ENCODE measurements at regions of chr6 and their contacts with region 1.

Region 1: DNA sequence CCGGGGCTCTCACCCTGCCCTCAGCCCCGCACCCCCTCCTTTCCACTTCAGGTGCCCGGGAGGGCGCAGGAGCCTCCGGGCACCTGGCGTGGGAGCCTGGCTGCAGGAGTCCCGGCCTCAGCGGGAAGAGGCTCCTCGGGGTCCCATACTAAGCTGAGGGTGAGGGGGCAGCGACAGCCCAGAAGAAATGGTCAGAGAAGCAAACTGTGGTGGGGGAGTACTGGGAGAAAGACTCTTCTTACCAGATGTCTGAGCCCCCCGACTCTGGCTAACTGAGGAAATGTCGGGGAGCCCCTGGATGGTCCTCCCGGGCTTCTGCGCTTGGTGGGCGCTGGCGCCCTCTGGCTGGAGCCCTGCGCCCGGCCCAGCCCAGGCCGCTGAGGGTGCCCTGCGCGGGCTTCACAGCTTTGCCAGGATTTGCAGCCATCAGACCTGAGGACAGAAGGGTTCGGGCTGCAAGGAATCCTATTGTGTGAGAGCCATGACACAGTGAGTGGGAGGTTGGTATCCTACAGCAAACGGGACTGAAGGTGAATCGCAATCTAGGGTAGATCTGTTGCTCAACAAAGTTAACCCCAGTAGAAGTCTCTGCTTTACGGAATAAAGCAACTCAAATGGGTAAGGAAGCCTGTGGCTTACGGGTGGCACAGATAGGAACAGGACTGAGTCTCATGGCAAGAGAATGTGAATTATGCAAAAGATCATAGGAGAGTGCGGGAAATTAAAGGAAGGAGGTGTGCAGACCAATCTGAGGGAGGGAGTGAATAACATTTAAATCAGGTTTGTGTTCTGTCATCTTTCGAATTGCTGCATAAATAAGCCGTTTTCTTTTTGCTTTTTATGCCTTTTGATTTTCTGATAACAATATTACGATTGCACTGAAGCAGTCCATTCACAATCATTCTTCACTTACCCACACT is 639 bp upstream of the RCAN2 start:
- DNase-seq: peak in 1 of 2 donors; percentile 83
- H3K4me3 ChIP-seq: peak overlapping the region; percentile 64 to 89
- H3K27ac ChIP-seq: peak overlapping the region; percentile 94 to 97
- H3K4me1 ChIP-seq: no peaks in the 10 kb centered on the region
- H3K27me3 ChIP-seq: no peaks in the 10 kb centered on the region
- CTCF ChIP-seq: peak; percentile 81 to 95 (median 83)

Region 2: DNA sequence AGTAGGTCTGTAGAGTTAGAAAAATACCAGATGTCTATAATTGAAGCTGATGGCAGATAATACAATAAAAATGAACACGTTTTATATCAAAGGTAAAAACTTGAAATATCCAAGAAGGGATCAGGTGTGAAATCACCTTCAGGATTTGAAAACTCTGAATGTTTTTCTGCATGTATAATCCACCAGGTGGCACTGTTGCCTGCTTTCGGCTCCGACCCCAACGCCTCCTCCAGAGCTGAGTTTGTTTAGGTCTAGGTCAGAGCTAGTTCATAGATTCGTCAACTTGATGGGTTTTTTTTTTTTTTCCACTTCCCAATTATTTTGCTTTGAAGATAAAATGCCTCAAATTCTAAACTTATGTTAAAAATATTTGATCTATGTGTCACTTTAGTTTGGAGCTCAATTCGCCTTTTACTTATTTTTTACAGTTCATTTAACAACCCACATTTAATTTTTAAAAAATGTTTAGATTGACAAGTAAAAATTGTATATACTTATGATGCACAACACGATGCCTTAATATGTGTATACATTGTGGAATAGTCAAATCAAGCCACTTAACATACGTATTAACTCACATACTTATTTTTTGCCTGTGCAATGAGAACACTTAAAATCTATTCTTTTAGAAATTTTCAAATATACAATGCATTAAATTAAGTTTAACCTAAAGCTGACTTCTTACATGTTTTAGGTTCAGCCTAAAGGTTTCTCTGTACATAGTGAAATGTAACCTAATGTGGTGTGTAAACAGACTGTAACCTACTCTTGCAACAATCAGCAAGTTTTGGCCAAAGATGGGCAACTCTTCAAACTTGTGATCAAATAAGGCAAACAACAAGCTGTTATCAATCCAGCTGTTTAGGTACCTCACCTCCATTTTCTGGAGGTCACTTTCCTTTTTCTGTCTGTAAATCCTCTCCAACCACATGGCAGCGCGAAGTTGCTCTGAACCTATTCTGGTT is 401.5 kb before region 1 on chr6:
- intact Hi-C with region 1: loop called (anchors 5 kb)
- DNase-seq: peak in 1 of 2 donors; percentile 73
- H3K4me3 ChIP-seq: no peak overlapping the region
- H3K27ac ChIP-seq: no peak overlapping the region
- H3K4me1 ChIP-seq: no peaks in the 10 kb centered on the region
- H3K27me3 ChIP-seq: no peaks in the 10 kb centered on the region
- CTCF ChIP-seq: peak; percentile 58 to 80 (median 67)

Region 3: DNA sequence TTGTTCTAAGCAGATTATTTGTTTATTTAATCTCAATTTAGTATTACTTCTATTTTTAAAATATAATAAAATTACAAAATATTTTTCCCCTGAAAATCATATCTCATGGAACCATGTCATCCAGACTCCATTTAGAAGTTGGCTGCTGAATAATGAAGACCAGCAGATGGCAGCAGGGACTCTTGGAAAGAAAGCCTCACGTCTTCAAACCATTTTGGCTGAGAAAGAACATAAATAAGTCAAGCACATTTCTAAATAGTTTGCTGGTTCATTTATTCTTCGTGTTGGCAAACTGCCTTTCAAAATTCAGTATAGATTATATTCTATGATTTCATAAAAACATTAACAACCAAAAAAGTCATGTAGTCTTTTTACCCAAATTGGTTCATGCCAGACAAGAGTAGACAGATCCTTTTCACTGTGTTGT is 72.3 kb before region 1 on chr6:
- intact Hi-C with region 1: loop called (anchors 1 kb)
- DNase-seq: peak in 1 of 2 donors; percentile 81
- H3K4me3 ChIP-seq: no peak overlapping the region
- H3K27ac ChIP-seq: peak overlapping the region; percentile 68 to 72
- H3K4me1 ChIP-seq: peaks cover 17 to 32% of the 10 kb centered on the region in 2 donors
- H3K27me3 ChIP-seq: no peaks in the 10 kb centered on the region
- CTCF ChIP-seq: peak; percentile 69 to 86 (median 85)

Region 4: GRCh38 chr6:46437671-46438221 is 54.1 kb before region 1 on chr6:
- intact Hi-C with region 1: loop called (anchors 5 kb)
- DNase-seq: no peak
- H3K4me3 ChIP-seq: no peak overlapping the region
- H3K27ac ChIP-seq: peak overlapping the region; percentile 62 to 90
- H3K4me1 ChIP-seq: peaks cover 8 to 58% of the 10 kb centered on the region in 2 donors
- H3K27me3 ChIP-seq: no peaks in the 10 kb centered on the region
- CTCF ChIP-seq: no peak

Region 5: GRCh38 chr6:46453741-46454316 is 38.1 kb before region 1 on chr6:
- intact Hi-C with region 1: loop called (anchors 2 kb)
- DNase-seq: no peak
- H3K4me3 ChIP-seq: peak overlapping the region in 1 of 2 donors; percentile 20
- H3K27ac ChIP-seq: peak overlapping the region; percentile 53 to 83
- H3K4me1 ChIP-seq: peaks cover 3 to 51% of the 10 kb centered on the region in 2 donors
- H3K27me3 ChIP-seq: no peaks in the 10 kb centered on the region
- CTCF ChIP-seq: no peak

Region 6: DNA sequence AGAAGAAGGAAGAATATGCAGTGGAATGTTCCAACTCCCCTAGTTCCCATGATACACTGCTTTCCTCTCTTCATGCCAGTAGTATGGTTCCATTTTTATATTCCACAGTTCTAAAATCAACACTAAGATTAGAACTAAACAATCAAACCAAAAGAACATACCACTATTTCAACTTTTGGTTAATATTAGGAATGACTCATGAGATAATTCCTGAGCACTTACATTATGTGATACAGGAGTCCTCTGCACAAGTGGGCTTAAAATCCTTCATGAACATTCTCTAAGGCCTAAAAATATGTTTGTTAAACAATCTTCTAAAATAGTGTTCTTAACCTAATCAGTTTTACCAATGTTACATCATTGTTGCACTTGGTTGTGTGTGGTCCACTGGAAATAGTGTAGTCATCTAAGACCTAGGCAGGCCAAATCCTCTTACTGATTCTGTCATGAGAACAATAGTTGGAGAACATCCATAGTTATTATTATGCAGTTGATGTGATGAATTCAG is 29.6 kb after region 1 on chr6:
- intact Hi-C with region 1: loop called (anchors 2 kb)
- DNase-seq: peak in 1 of 2 donors; percentile 69
- H3K4me3 ChIP-seq: no peak overlapping the region
- H3K27ac ChIP-seq: peak overlapping the region; percentile 83 to 86
- H3K4me1 ChIP-seq: peaks cover 9 to 41% of the 10 kb centered on the region in 2 donors
- H3K27me3 ChIP-seq: no peaks in the 10 kb centered on the region
- CTCF ChIP-seq: no peak

Region 7: GRCh38 chr6:46626228-46626909 is 134.5 kb after region 1 on chr6:
- intact Hi-C with region 1: loop called (anchors 2 kb)
- DNase-seq: no peak
- H3K4me3 ChIP-seq: peak overlapping the region; percentile 5 to 53
- H3K27ac ChIP-seq: no peak overlapping the region
- H3K4me1 ChIP-seq: no peaks in the 10 kb centered on the region
- H3K27me3 ChIP-seq: no peaks in the 10 kb centered on the region
- CTCF ChIP-seq: peak; percentile 62 to 74 (median 63)

Measured in ascending aorta (tissue), 2 donors.